Sigmoid colon (tissue), 7 donors: ENCODE measurements at regions of chr19 and their contacts with region 1.

Region 1: DNA sequence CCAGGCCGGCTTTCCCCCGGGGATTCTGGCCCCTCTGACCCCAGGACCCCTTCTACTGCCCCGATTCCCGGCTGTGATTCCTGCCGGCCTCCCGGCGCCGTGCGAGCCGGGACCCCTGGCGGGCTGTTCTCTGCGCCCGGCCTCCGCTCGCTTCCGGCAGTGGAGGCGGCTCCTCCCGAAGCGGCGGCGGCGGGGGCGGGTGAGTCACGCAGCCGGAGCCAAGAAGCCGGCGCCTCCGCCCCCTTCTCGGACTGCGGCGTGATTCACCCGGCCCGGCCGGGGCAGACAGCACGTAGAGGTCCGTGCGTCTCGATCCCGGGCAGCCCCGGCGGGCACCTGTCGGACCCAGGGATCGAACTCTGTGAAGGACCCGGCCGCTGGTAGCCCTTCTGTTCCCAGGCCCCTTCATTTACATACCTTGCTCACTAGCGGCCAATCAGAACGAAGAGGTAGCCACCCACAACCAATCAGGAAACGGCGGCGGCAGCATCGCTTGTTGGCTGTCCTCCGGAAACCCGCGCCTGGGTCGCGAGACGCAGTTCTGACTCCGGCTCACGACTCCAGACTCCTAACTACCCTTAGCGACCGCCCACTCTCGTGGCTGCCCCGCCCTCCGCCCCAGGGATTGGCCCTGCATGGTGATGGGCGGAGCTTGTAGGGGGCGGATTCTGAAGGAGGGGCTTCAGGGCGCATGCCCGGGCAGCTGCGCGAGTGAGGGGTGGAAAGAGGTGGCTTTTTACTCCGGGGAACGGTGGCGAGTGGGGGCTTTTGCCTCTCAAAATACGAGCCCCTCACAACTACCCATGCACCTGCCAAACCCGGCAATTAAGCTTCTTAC is at the start of gene SERTAD1:
- DNase-seq: peak; percentile 100
- H3K4me3 ChIP-seq: peak within 1 kb of the TSS; percentile 61 to 98 (median 86)
- H3K27ac ChIP-seq: peak within 1 kb of the TSS; percentile 95 to 100 (median 99)
- H3K4me1 ChIP-seq: peaks cover 0 to 47% (median 37%) of the 10 kb centered on the region in 4 donors
- H3K27me3 ChIP-seq: no peaks in the 10 kb centered on the region
- CTCF ChIP-seq: peak; percentile 64 to 93 (median 88)
- EP300 ChIP-seq: no peak
- POLR2A ChIP-seq: peak; percentile 94 to 98
- total RNA-seq, gene SERTAD1: 10.2 to 29.2 (median 15.7) TPM

Region 2: DNA sequence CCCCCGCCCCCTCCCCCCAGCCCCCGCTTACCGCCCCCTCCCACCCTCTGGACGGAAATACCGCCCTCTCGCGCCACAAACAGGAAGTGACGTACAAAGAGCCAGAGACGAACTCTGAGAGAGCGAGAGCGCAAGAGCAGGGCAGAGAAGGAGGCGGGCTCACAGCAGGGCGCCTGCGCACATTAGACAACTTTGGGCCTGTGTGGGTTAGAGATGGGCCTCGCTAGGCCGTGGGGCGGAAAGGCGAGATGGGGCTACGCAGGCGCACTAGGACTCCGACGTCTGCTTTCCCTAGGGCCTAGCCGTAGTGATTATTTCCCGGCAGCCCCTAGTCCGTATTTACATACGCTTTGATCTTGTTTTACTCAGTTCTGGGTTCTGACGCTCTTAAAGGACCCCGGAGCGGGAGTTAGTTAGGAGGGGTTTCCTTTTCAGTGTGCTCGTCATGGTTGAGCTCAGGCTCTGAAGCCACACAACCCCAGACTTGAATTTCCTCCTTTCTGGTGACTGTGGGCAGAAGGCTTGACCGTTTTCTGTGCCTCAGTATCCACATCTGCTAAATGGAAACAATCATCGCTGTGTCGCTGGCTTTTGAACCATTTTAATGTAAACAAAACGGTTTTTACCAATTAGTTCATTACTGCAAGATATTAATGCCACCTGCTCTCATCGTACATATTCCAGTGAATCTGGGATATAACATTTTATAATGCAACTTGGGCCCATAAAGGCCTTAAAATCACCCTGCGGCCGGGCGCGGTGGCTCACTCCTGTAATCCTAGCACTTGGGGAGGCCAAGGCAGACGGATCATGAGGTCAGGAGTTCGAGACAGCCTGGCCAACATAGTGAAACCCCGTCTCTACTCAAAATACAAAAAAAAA is 140.1 kb before region 1 on chr19:
- intact Hi-C with region 1: loop called (anchors 10 kb)
- DNase-seq: peak; percentile 100
- H3K4me3 ChIP-seq: peak overlapping the region; percentile 91 to 100 (median 98)
- H3K27ac ChIP-seq: peak overlapping the region; percentile 96 to 99 (median 98)
- H3K4me1 ChIP-seq: peaks cover 0 to 47% (median 42%) of the 10 kb centered on the region in 4 donors
- H3K27me3 ChIP-seq: no peaks in the 10 kb centered on the region
- CTCF ChIP-seq: no peak
- EP300 ChIP-seq: peak in 1 of 4 donors; percentile 55
- POLR2A ChIP-seq: no peak

Region 3: GRCh38 chr19:40348125-40348913 is 77.3 kb before region 1 on chr19 and contains the starts of genes C19orf47 and PLD3:
- intact Hi-C with region 1: loop called (anchors 5 kb)
- DNase-seq: peak; percentile 100
- H3K4me3 ChIP-seq: peak within 1 kb of the TSS; percentile 69 to 90 (median 76)
- H3K27ac ChIP-seq: peak within 1 kb of the TSS; percentile 78 to 84 (median 84)
- H3K4me1 ChIP-seq: peaks cover 0 to 30% (median 22%) of the 10 kb centered on the region in 4 donors
- H3K27me3 ChIP-seq: no peaks in the 10 kb centered on the region
- CTCF ChIP-seq: no peak
- EP300 ChIP-seq: peak in 1 of 4 donors; percentile 80
- POLR2A ChIP-seq: peak; percentile 91 to 93
- total RNA-seq, gene C19orf47: 8.9 to 12.8 (median 11.5) TPM
- total RNA-seq, gene PLD3: 164 to 270 (median 230) TPM

Region 4: DNA sequence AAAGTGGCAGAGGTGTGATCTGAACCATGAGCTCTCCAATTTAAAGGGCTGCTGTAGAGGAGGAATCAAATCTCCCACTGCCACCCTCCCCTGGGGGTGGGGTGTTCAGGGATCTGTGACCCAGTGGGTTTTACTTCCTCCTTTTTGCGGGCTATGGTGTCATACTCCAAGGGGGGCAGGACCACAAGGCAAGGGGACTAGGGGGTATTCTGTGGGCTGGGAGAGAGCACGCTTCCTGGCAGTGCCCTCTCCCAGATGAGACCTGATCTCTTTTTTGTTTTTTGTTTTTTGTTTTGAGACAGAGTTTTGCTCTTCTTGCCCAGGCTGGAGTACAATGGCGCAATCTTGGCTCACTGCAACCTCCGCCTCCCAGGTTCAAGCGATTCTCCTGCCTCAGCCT is 66.9 kb before region 1 on chr19:
- intact Hi-C with region 1: no loop called
- DNase-seq: no peak
- H3K4me3 ChIP-seq: no peak overlapping the region
- H3K27ac ChIP-seq: no peak overlapping the region
- H3K4me1 ChIP-seq: peaks cover 0 to 5% (median 2%) of the 10 kb centered on the region in 4 donors
- H3K27me3 ChIP-seq: no peaks in the 10 kb centered on the region
- CTCF ChIP-seq: no peak
- EP300 ChIP-seq: no peak
- POLR2A ChIP-seq: no peak

Region 5: GRCh38 chr19:40603389-40604135 is 177.9 kb after region 1 on chr19:
- intact Hi-C with region 1: loop called (anchors 5 kb)
- DNase-seq: peak; percentile 99
- H3K4me3 ChIP-seq: peak overlapping the region; percentile 37 to 61 (median 53)
- H3K27ac ChIP-seq: peak overlapping the region; percentile 71 to 85 (median 84)
- H3K4me1 ChIP-seq: peaks cover 0 to 73% (median 69%) of the 10 kb centered on the region in 4 donors
- H3K27me3 ChIP-seq: peaks cover 3 to 18% (median 11%) of the 10 kb centered on the region in 3 donors
- CTCF ChIP-seq: no peak
- EP300 ChIP-seq: no peak
- POLR2A ChIP-seq: peak in 1 of 2 donors; percentile 30